ENCODE measurements at regions of chr2 and their contacts with region 1.

Region 1: GRCh38 chr2:6773007-6773693 is 92.6 kb downstream of the CMPK2 start:
- DNase-seq: peak; percentile 66 to 88
- H3K4me3 ChIP-seq: peak overlapping the region in 3 of 4 donors; percentile 20 to 27 (median 24)
- H3K27ac ChIP-seq: no peak overlapping the region
- H3K4me1 ChIP-seq: peaks cover 6 to 13% (median 9%) of the 10 kb centered on the region in 4 donors
- H3K27me3 ChIP-seq: peaks cover 0 to 44% (median 11%) of the 10 kb centered on the region in 3 donors
- CTCF ChIP-seq: peak in 5 of 7 experiments; percentile 77 to 93 (median 82)
- EP300 ChIP-seq: no peak
- POLR2A ChIP-seq: no peak

Region 2: DNA sequence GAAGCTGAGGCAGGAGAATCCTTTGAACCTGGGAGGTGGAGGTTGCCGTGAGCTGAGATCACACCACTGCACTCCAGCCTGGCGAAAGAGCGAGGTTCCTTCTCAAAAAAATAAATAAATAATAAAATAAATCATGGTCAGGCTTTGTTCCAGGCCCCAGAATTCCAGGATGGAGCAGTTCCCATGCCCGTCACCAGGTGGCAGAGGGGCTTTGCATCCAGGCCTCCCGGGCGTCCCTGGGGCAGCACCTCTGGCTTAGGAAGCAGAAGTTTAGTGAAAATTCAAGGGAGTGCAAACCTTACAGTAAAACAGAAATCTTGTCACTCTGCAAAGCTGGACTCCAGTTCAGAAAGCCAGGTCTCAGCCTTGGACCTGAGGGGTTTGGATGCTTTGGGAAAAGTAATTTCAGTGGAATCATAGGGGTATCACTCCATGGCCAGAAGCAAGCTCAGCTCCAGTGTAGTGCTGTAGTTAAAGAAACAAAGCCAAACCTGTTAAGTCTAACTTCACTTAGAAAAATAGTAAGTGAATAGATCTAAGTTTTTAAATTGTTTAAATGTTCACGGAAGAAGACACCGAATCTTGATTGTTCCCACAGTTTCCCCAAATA is 420.1 kb before region 1 on chr2:
- intact Hi-C with region 1: loop called (anchors 10 kb)
- DNase-seq: peak; percentile 71 to 73
- H3K4me3 ChIP-seq: no peak overlapping the region
- H3K27ac ChIP-seq: no peak overlapping the region
- H3K4me1 ChIP-seq: no peaks in the 10 kb centered on the region
- H3K27me3 ChIP-seq: no peaks in the 10 kb centered on the region
- CTCF ChIP-seq: peak in 5 of 7 experiments; percentile 47 to 69 (median 63)
- EP300 ChIP-seq: no peak
- POLR2A ChIP-seq: no peak

Region 3: DNA sequence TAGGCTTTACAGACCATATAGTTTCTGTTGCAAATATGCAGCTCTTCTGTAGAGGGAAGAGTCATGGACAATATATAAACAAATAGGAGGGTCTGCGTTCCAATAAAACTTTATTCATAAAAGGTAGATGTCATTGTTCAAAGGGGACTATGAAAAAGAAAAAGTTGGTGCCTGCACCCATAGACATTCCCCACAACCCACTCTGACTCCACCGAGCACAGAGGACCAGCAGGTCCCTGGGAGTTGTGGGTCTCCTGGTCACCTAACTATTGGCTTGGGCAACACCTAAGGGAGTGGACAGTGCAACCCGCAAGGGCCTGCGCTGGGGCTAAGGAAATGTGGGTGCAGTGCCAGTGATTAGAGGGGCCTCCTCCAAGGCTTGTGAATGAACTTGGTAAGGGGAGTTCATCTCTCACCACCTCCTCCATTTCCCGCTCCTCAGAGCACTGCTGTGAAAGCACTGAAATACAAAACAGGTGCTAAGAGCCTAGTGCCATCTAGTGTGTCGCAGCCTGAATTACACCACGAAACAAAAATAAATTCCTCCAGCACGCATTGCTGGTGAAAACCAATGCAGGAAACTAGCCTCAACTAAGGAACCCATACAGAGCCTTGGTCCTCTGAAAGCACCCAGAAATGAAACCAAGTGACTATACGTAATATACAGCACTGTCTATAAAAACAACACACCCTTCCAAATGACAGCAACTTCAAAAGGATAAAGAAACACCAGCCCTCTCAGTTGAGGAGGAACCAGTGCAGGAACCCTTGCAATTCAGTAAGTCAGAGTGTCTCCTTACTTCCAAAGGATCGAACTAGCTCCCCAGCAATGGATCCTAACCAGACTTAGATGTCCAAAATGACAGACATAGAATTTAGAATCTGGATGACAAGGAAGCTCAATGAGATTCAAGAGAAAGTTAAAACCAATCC is 310.7 kb after region 1 on chr2:
- intact Hi-C with region 1: no loop called
- DNase-seq: peak in 1 of 2 donors; percentile 22
- H3K4me3 ChIP-seq: no peak overlapping the region
- H3K27ac ChIP-seq: no peak overlapping the region
- H3K4me1 ChIP-seq: no peaks in the 10 kb centered on the region
- H3K27me3 ChIP-seq: no peaks in the 10 kb centered on the region
- CTCF ChIP-seq: peak in 3 of 7 experiments; percentile 16 to 25 (median 20)
- EP300 ChIP-seq: no peak
- POLR2A ChIP-seq: no peak